Activated CD4-positive, alpha-beta memory T cell treated with anti-CD3 and anti-CD28 coated beads for 36 hours (primary cell): ENCODE measurements at regions of chr13 and their contacts with region 1.

Region 1: GRCh38 chr13:95834134-95834765 is 157.3 kb downstream of the DNAJC3 start:
- DNase-seq: peak; percentile 78
- H3K4me3 Mint-ChIP-seq: no peak overlapping the region
- H3K27ac Mint-ChIP-seq: no peak overlapping the region
- H3K4me1 Mint-ChIP-seq: no peaks in the 10 kb centered on the region
- H3K27me3 Mint-ChIP-seq: peaks cover 10% of the 10 kb centered on the region

Region 2: DNA sequence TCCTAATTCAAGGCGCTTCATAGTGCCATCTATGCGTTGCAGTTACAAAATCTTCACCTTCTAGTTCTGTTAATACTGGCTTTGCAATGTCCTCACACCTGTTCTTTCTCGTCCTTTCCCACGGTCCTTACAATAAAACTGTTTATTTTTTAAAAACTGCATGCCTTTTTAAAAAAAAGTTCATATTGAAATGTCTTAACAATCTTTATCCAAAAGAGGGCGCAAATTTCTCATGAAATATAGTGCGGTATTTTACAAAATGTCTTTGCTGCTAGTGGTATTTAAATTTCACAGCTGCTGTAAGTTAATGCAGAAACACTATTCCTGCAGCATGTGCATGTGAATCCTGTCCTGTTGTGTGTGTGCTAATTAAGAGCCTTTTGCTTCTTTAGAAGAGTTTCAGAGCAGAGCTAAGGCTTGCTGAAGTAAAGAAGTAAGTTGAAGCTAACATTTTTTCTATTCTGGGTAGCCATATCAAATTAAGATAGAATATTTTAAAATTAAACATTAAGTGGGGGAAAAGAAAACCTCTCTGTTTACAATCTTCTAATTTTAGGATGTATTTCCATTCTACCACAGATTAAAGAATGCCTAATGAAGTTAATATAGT is 297.5 kb before region 1 on chr13:
- CTCF ChIA-PET with region 1: interaction called, 53 read pairs
- POLR2A ChIA-PET with region 1: no interaction called
- intact Hi-C with region 1: loop called (anchors 1 kb)
- DNase-seq: no peak
- H3K4me3 Mint-ChIP-seq: no peak overlapping the region
- H3K27ac Mint-ChIP-seq: no peak overlapping the region
- H3K4me1 Mint-ChIP-seq: peaks cover 7% of the 10 kb centered on the region
- H3K27me3 Mint-ChIP-seq: peaks cover 18% of the 10 kb centered on the region

Region 3: DNA sequence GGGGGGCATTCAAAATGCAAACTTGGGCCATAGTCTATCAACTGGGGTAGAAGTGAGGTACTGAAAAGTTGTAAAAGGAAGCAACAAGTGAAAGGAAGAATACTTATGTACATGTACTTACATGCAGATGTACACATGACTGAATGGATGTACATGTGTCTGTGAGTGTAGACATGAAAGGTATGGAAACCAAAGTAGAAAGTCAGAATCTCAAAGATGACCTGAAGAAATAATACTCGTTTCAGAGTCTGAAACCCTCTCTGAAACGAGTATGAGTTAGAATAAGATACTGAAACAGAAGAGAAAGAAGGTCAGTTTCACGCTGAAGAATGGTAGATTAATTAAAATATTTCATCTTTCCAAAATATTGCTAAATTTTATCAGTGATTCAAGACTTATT is 203.7 kb before region 1 on chr13:
- CTCF ChIA-PET with region 1: interaction called, 192 read pairs
- POLR2A ChIA-PET with region 1: no interaction called
- intact Hi-C with region 1: no loop called
- DNase-seq: no peak
- H3K4me3 Mint-ChIP-seq: no peak overlapping the region
- H3K27ac Mint-ChIP-seq: no peak overlapping the region
- H3K4me1 Mint-ChIP-seq: no peaks in the 10 kb centered on the region
- H3K27me3 Mint-ChIP-seq: peaks cover 25% of the 10 kb centered on the region

Region 4: GRCh38 chr13:95740914-95741313 is 93.3 kb before region 1 on chr13:
- CTCF ChIA-PET with region 1: no interaction called
- POLR2A ChIA-PET with region 1: no interaction called
- intact Hi-C with region 1: no loop called
- DNase-seq: no peak
- H3K4me3 Mint-ChIP-seq: no peak overlapping the region
- H3K27ac Mint-ChIP-seq: no peak overlapping the region
- H3K4me1 Mint-ChIP-seq: peaks cover 13% of the 10 kb centered on the region
- H3K27me3 Mint-ChIP-seq: no peaks in the 10 kb centered on the region

Region 5: GRCh38 chr13:95791084-95791722 is 43.0 kb before region 1 on chr13:
- CTCF ChIA-PET with region 1: interaction called, 11 read pairs
- POLR2A ChIA-PET with region 1: no interaction called
- intact Hi-C with region 1: no loop called
- DNase-seq: no peak
- H3K4me3 Mint-ChIP-seq: no peak overlapping the region
- H3K27ac Mint-ChIP-seq: no peak overlapping the region
- H3K4me1 Mint-ChIP-seq: no peaks in the 10 kb centered on the region
- H3K27me3 Mint-ChIP-seq: no peaks in the 10 kb centered on the region

Region 6: GRCh38 chr13:95801825-95802224 is 32.4 kb before region 1 on chr13:
- CTCF ChIA-PET with region 1: no interaction called
- POLR2A ChIA-PET with region 1: no interaction called
- intact Hi-C with region 1: no loop called
- DNase-seq: no peak
- H3K4me3 Mint-ChIP-seq: no peak overlapping the region
- H3K27ac Mint-ChIP-seq: no peak overlapping the region
- H3K4me1 Mint-ChIP-seq: no peaks in the 10 kb centered on the region
- H3K27me3 Mint-ChIP-seq: peaks cover 4% of the 10 kb centered on the region

Region 7: DNA sequence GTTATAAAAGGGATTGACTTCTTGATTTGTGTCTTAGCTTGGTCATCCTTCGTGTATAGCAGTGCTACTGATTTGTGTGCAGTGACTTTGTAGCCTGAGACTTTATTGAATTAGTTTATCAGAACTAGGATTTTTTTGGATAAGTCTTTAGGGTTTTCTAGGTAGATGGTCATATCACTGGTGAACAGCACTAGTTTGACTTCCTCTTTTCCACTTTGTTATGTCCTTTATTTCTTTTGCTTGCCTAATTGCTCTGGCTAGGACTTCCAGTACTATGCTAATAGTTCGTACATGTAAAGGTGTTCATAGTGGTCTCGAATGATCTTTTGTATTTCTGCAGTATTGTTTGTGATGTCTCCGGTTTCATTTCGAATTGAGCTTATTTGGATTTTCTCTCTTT is 11.9 kb before region 1 on chr13:
- CTCF ChIA-PET with region 1: interaction called, 27 read pairs
- POLR2A ChIA-PET with region 1: no interaction called
- intact Hi-C with region 1: no loop called
- DNase-seq: no peak
- H3K4me3 Mint-ChIP-seq: no peak overlapping the region
- H3K27ac Mint-ChIP-seq: no peak overlapping the region
- H3K4me1 Mint-ChIP-seq: no peaks in the 10 kb centered on the region
- H3K27me3 Mint-ChIP-seq: peaks cover 12% of the 10 kb centered on the region